ENCODE measurements at regions of chr17 and their contacts with region 1.

Region 1: DNA sequence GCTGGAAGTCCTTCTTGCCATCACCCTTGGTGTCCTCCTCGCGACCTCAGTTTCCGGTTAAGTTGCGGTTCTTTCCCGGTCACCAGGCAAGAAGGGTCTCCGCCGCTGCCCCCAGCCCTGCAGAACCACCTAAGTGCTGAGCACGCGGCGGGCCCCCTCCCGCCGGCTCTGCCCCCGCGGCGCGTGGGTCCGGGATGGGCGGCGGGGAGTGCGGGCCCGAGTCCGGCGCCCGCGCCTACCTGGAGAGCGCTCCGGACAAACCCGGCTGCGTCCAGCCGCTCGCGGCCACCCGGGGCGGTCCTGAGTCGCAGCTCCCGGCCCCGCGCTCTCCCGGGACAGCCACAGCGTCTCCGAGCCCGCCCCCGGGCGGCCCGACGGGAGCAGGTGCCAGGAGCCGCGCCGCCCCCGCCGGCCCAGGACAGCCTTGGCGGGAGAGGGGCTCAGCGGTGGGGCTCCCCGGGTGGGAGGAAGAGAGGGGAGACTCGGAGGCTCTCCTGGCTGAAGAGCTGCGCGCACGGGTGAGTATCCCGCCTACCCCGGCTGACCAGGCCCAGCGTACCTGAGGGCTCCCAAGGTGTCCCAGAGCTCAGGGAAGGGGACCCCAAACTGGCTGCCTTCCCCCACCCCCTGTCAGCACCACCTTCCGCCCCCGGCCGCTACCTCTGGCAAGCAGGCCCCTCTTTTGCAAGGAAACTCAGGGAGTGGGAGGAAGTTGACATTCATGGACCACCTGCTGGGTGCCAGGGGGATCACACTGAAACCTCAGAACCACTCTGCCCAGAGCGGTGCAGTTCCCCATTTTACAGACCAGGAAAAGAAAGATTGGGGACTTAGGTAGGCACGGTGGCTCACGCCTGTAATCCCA is 22.2 kb upstream of the C17orf113 start:
- DNase-seq: no peak

Region 2: GRCh38 chr17:42027961-42028790 is 44.4 kb before region 1 on chr17:
- intact Hi-C with region 1: loop called in 1 of 2 experiments (anchors 2 kb)
- DNase-seq: no peak

Region 3: GRCh38 chr17:42039794-42040763 is 32.5 kb before region 1 on chr17:
- intact Hi-C with region 1: no loop called
- DNase-seq: no peak